Activated naive CD4-positive, alpha-beta T cell treated with anti-CD3 and anti-CD28 coated beads for 36 hours (primary cell): ENCODE measurements at regions of chr4 and their contacts with region 1.

Region 1: GRCh38 chr4:24419181-24420034 is 164.9 kb downstream of the DHX15 start:
- DNase-seq: peak; percentile 82
- H3K4me3 Mint-ChIP-seq: no peak overlapping the region
- H3K27ac Mint-ChIP-seq: no peak overlapping the region
- H3K4me1 Mint-ChIP-seq: peaks cover 3% of the 10 kb centered on the region
- H3K27me3 Mint-ChIP-seq: peaks cover 9% of the 10 kb centered on the region

Region 2: GRCh38 chr4:22897520-22898108 is 1521.8 kb before region 1 on chr4:
- CTCF ChIA-PET with region 1: interaction called, 7 read pairs
- intact Hi-C with region 1: loop called (anchors 1 kb)
- DNase-seq: peak; percentile 38
- H3K4me3 Mint-ChIP-seq: no peak overlapping the region
- H3K27ac Mint-ChIP-seq: no peak overlapping the region
- H3K4me1 Mint-ChIP-seq: no peaks in the 10 kb centered on the region
- H3K27me3 Mint-ChIP-seq: peaks cover 6% of the 10 kb centered on the region

Region 3: GRCh38 chr4:23135792-23136645 is 1283.4 kb before region 1 on chr4:
- CTCF ChIA-PET with region 1: interaction called, 11 read pairs
- intact Hi-C with region 1: loop called (anchors 1 kb)
- DNase-seq: no peak
- H3K4me3 Mint-ChIP-seq: no peak overlapping the region
- H3K27ac Mint-ChIP-seq: no peak overlapping the region
- H3K4me1 Mint-ChIP-seq: no peaks in the 10 kb centered on the region
- H3K27me3 Mint-ChIP-seq: peaks cover 10% of the 10 kb centered on the region

Region 4: GRCh38 chr4:23373261-23373660 is 1046.1 kb before region 1 on chr4:
- CTCF ChIA-PET with region 1: interaction called, 3 read pairs
- intact Hi-C with region 1: loop called (anchors 10 kb)
- DNase-seq: peak; percentile 69
- H3K4me3 Mint-ChIP-seq: no peak overlapping the region
- H3K27ac Mint-ChIP-seq: peak overlapping the region; percentile 15
- H3K4me1 Mint-ChIP-seq: peaks cover 5% of the 10 kb centered on the region
- H3K27me3 Mint-ChIP-seq: no peaks in the 10 kb centered on the region

Region 5: GRCh38 chr4:23717528-23718248 is 701.7 kb before region 1 on chr4:
- CTCF ChIA-PET with region 1: no interaction called
- intact Hi-C with region 1: loop called (anchors 5 kb)
- DNase-seq: peak; percentile 13
- H3K4me3 Mint-ChIP-seq: no peak overlapping the region
- H3K27ac Mint-ChIP-seq: no peak overlapping the region
- H3K4me1 Mint-ChIP-seq: no peaks in the 10 kb centered on the region
- H3K27me3 Mint-ChIP-seq: no peaks in the 10 kb centered on the region

Region 6: DNA sequence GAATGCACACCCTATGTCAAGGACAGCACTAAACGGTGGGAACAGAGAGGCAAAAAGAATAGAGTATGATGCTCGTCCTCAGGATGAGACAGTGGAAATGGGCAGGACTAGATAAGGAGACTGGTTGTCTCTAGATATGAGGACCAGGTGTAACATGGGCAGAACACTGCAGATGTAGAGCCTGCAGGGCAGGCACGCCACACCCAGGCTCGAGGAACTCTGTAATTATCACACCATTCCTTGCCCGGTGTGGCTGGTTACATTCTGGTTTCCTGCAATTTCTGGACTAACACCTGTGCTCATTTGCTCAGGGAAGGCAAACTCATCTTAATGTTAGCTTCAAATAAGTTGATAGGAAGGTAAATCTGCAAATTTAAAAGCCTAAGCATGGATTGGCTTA is 169.4 kb before region 1 on chr4:
- CTCF ChIA-PET with region 1: no interaction called
- intact Hi-C with region 1: loop called (anchors 10 kb)
- DNase-seq: no peak
- H3K4me3 Mint-ChIP-seq: no peak overlapping the region
- H3K27ac Mint-ChIP-seq: no peak overlapping the region
- H3K4me1 Mint-ChIP-seq: no peaks in the 10 kb centered on the region
- H3K27me3 Mint-ChIP-seq: peaks cover 13% of the 10 kb centered on the region